Activated naive CD4-positive, alpha-beta T cell treated with anti-CD3 and anti-CD28 coated beads, Interleukin-2, amount 10 ng/mL, durations not matched to agents 7 days and 5 days (primary cell): ENCODE measurements at regions of chr9 and their contacts with region 1.

Region 1: GRCh38 chr9:16133556-16134227 is 580.8 kb downstream of the CCDC171 start:
- DNase-seq: peak; percentile 27
- H3K4me3 Mint-ChIP-seq: no peak overlapping the region
- H3K27ac Mint-ChIP-seq: no peak overlapping the region
- H3K4me1 Mint-ChIP-seq: no peaks in the 10 kb centered on the region
- H3K27me3 Mint-ChIP-seq: no peaks in the 10 kb centered on the region

Region 2: GRCh38 chr9:15873569-15874177 is 260.0 kb before region 1 on chr9:
- CTCF ChIA-PET with region 1: interaction called, 23 read pairs
- DNase-seq: no peak
- H3K4me3 Mint-ChIP-seq: no peak overlapping the region
- H3K27ac Mint-ChIP-seq: no peak overlapping the region
- H3K4me1 Mint-ChIP-seq: no peaks in the 10 kb centered on the region
- H3K27me3 Mint-ChIP-seq: no peaks in the 10 kb centered on the region

Region 3: GRCh38 chr9:16074963-16075362 is 58.7 kb before region 1 on chr9:
- CTCF ChIA-PET with region 1: no interaction called
- DNase-seq: no peak
- H3K4me3 Mint-ChIP-seq: no peak overlapping the region
- H3K27ac Mint-ChIP-seq: no peak overlapping the region
- H3K4me1 Mint-ChIP-seq: no peaks in the 10 kb centered on the region
- H3K27me3 Mint-ChIP-seq: no peaks in the 10 kb centered on the region

Region 4: GRCh38 chr9:16121601-16122286 is 11.9 kb before region 1 on chr9:
- CTCF ChIA-PET with region 1: no interaction called
- DNase-seq: no peak
- H3K4me3 Mint-ChIP-seq: no peak overlapping the region
- H3K27ac Mint-ChIP-seq: no peak overlapping the region
- H3K4me1 Mint-ChIP-seq: no peaks in the 10 kb centered on the region
- H3K27me3 Mint-ChIP-seq: no peaks in the 10 kb centered on the region

Region 5: DNA sequence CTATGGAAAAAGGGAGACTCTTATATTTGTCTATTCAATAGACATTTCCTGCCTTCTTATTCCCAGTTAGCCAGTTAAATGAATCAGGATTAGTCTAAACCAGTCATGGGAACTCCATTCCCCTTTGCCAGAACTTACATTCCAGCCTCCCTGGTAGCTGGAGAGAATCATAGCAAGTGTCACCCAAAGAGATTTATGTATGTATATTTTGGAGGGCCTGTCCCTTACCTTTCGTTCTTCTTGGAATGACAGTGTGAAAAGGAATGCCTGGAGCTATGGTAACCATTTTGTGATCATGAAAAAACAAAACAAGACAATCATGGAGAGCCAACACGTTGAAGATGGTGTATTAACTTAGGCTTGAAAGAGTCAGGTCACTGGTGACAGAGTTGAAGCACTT is 46.9 kb after region 1 on chr9:
- CTCF ChIA-PET with region 1: no interaction called
- DNase-seq: no peak
- H3K4me3 Mint-ChIP-seq: no peak overlapping the region
- H3K27ac Mint-ChIP-seq: no peak overlapping the region
- H3K4me1 Mint-ChIP-seq: no peaks in the 10 kb centered on the region
- H3K27me3 Mint-ChIP-seq: no peaks in the 10 kb centered on the region